ENCODE measurements at regions of chr19 and their contacts with region 1.

Region 1: DNA sequence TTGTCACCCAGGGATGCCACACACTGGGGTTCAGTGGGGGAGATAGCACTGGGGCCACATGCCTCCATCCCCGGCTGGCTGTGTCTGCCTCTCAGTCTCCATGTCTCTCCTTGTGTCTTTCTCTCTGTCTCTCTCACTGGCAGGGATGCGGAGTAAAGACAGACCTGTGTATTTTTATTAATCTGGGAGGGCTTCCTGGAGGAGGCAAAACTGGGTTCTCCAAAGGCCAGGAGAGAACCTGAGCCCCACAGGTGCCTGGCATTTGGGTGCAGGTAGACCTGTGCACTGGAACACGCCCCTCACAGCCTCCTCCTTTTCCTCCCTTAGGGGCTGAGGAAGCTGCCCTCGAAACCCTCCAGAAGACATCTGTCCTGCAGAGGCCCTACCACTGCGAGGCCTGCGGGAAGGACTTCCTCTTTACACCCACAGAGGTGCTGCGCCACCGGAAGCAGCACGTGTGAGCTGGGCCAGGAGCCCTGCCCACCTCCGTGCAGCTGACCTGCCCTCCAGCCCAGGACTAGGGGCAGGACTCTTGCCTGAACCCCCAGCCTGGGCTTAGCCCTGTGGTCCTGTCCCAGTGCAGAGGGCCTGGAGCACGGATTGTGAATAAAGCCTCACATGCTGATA is 32.7 kb downstream of the DHX34 start:
- DNase-seq: no peak

Region 2: DNA sequence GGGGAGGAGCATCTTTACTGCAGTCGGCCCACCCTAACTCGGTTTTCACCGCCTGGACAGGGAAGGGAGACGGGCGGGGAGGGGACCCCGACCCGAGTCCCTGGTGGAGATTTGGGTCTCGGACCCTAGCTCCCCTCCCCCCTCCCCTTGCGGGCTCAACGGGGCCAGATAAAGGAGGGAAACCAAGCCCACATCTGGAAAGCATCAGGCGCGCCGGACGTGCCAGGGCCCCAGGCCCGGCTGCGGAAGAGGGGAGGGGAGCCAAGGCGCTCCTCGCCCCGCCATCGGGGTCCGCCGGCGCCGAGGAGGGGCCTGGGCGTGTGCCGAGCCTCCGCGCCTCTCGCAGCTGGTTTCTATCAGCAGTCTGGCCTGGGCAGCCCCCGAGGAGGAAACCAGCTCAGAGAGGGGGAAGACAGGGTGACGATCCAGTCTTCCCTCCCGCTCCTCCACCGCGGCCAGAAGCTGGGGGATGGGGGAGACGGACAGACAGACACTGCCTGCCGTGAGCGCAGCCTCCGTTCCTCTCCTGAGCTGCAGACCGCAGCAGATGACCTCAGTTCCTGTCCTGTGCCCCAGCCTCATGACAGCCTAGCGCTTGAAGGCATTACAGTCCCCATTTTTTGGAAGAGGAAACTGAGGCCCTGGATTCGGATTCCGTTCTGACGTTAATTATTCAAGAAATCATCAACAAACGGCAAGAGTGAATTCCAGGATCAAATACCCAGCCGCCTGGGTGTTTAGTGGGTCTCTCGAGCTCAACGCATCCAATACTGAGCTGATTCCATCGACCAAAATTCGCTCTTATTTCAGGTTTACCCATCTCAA is 742.2 kb before region 1 on chr19:
- intact Hi-C with region 1: no loop called
- DNase-seq: peak; percentile 88

Region 3: GRCh38 chr19:47398707-47399597 is 17.2 kb after region 1 on chr19:
- intact Hi-C with region 1: no loop called
- DNase-seq: no peak

Region 4: GRCh38 chr19:47428177-47428894 is 46.6 kb after region 1 on chr19:
- intact Hi-C with region 1: loop called in 1 of 2 experiments (anchors 1 kb)
- DNase-seq: peak; percentile 94

Region 5: GRCh38 chr19:47613165-47614020 is 231.6 kb after region 1 on chr19:
- intact Hi-C with region 1: no loop called
- DNase-seq: no peak

Measured in posterior vena cava (tissue), 2 donors.